ENCODE measurements at regions of chr19 and their contacts with region 1.

Region 1: DNA sequence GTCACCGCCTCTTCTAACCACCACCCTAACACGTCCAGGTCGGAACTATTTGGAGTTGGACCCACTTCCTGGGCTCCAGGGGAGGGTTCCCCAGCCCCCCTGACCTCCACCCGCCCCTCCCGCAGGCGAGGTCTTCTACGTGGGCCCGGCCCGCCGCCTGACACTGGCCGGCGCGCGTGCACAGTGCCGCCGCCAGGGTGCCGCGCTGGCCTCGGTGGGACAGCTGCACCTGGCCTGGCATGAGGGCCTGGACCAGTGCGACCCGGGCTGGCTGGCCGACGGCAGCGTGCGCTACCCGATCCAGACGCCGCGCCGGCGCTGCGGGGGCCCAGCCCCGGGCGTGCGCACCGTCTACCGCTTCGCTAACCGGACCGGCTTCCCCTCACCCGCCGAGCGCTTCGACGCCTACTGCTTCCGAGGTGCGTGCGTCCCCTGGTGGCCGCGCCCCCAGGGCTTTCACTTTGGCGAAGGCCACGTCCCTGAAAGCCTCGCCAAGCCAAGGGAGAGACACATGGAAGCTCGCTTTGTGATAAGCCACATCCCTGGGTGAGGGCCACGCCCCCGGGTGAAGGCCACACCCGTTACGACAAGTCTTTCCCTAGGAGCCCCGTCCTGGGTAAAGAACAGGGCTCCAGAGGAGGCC is 13.2 kb downstream of the NCAN start:
- DNase-seq: peak; percentile 84
- ATAC-seq: peak; percentile 96
- H3K4me3 Mint-ChIP-seq: peak overlapping the region; percentile 55
- H3K27ac Mint-ChIP-seq: no peak overlapping the region
- H3K4me1 Mint-ChIP-seq: peaks cover 3% of the 10 kb centered on the region
- H3K27me3 Mint-ChIP-seq: peaks cover 20% of the 10 kb centered on the region

Region 2: DNA sequence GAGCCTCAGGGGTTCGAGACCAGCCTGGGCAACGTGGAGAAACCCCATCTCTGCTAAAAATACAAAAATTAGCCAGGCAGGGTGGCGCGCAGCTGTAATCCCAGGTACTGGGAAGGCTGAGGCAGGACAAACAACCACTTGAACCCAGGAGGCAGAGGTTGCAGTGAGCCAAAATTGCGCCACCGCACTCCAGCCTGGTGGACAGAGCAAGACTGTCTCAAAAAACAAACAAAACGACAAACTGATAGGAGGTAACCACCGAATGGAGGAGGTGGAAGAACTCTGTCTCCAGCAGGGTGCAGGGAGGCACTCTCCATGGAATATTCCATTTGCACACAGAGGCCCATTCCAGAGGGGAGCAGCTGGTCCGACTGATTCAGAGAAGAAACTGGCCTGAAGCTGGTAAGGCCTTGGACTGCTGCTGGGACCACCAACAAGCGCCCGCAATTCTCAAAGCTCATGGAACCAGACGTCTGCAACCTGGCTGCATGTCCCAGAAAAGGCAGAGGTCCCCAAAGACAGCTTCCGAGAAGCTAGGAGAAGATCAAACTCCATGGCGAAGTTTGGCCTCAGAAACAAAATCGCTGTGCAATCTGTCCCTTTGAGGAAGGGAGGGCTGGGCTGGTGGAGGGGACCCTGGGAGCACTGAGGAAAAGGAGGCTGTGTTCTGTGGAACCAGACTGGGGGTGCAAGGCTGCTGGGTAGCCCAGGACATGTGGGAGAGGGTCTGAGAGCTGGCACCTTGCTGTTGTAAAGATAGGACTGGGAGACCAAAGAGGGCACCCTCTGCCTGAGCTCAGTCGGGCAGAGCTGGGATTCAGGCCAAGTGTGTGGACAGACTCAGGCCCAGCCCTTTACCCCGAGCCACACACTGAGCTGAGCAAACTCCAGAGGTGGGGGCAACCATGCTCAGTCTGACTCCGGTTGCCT is 126.0 kb before region 1 on chr19:
- CTCF ChIA-PET with region 1: no interaction called
- DNase-seq: no peak
- ATAC-seq: no peak
- H3K4me3 Mint-ChIP-seq: no peak overlapping the region
- H3K27ac Mint-ChIP-seq: no peak overlapping the region
- H3K4me1 Mint-ChIP-seq: no peaks in the 10 kb centered on the region
- H3K27me3 Mint-ChIP-seq: no peaks in the 10 kb centered on the region

Region 3: DNA sequence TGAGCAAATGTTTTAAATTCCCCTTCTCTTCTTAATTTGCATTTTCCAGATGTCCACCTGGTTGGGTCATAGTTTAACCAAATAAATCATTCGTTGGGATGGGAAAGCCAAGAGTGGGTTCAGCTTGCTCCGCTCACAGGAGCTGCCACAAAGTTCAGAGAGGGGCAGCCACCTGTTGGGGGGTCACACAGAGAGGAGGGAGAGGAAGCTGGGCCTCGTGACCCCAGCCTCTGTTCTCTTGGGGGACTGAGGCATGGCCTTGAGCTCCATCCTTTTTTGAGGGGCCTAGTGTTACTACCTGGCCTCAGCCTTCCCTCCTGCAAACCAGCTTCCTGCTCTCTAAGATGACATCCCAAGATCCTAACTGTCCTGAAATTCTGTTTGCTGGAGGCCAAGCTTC is 57.4 kb before region 1 on chr19:
- CTCF ChIA-PET with region 1: no interaction called
- DNase-seq: no peak
- ATAC-seq: no peak
- H3K4me3 Mint-ChIP-seq: no peak overlapping the region
- H3K27ac Mint-ChIP-seq: no peak overlapping the region
- H3K4me1 Mint-ChIP-seq: peaks cover 12% of the 10 kb centered on the region
- H3K27me3 Mint-ChIP-seq: no peaks in the 10 kb centered on the region

Region 4: GRCh38 chr19:19185853-19186740 is 38.9 kb before region 1 on chr19:
- CTCF ChIA-PET with region 1: interaction called, 13 read pairs
- DNase-seq: peak; percentile 72
- ATAC-seq: peak; percentile 89
- H3K4me3 Mint-ChIP-seq: no peak overlapping the region
- H3K27ac Mint-ChIP-seq: no peak overlapping the region
- H3K4me1 Mint-ChIP-seq: peaks cover 21% of the 10 kb centered on the region
- H3K27me3 Mint-ChIP-seq: no peaks in the 10 kb centered on the region

Region 5: GRCh38 chr19:19203012-19203856 is 21.7 kb before region 1 on chr19 and contains the start of gene NR2C2AP:
- CTCF ChIA-PET with region 1: interaction called, 13 read pairs
- DNase-seq: peak; percentile 95
- ATAC-seq: peak; percentile 95
- H3K4me3 Mint-ChIP-seq: peak within 1 kb of the TSS; percentile 93
- H3K27ac Mint-ChIP-seq: peak within 1 kb of the TSS; percentile 90
- H3K4me1 Mint-ChIP-seq: peaks cover 39% of the 10 kb centered on the region
- H3K27me3 Mint-ChIP-seq: no peaks in the 10 kb centered on the region
- total RNA-seq, gene NR2C2AP: 32.8 to 33.0 TPM

Measured in activated CD8-positive, alpha-beta memory T cell treated with anti-CD3 and anti-CD28 coated beads, Interleukin-2, amount 10 ng/mL, durations not matched to agents 7 days and 5 days (primary cell).